ENCODE measurements at regions of chr13 and their contacts with region 1.

Region 1: DNA sequence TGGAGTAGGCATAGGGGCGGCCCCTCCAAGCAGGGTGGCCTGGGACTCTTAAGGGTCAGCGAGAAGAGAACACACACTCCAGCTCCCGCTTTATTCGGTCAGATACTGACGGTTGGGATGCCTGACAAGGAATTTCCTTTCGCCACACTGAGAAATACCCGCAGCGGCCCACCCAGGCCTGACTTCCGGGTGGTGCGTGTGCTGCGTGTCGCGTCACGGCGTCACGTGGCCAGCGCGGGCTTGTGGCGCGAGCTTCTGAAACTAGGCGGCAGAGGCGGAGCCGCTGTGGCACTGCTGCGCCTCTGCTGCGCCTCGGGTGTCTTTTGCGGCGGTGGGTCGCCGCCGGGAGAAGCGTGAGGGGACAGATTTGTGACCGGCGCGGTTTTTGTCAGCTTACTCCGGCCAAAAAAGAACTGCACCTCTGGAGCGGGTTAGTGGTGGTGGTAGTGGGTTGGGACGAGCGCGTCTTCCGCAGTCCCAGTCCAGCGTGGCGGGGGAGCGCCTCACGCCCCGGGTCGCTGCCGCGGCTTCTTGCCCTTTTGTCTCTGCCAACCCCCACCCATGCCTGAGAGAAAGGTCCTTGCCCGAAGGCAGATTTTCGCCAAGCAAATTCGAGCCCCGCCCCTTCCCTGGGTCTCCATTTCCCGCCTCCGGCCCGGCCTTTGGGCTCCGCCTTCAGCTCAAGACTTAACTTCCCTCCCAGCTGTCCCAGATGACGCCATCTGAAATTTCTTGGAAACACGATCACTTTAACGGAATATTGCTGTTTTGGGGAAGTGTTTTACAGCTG is at the starts of genes BRCA2 and ZAR1L:
- DNase-seq: peak; percentile 68
- ATAC-seq: peak; percentile 93
- H3K4me3 ChIP-seq: peak within 1 kb of the TSS; percentile 78
- H3K27ac ChIP-seq: peak within 1 kb of the TSS; percentile 97
- H3K4me1 ChIP-seq: peaks cover 20% of the 10 kb centered on the region
- H3K27me3 ChIP-seq: no peaks in the 10 kb centered on the region
- CTCF ChIP-seq: no peak
- EP300 ChIP-seq: no peak; a peak in 1 of 4 replicates
- POLR2A ChIP-seq: peak; percentile 91
- RAD21 ChIP-seq: no peak
- polyA plus RNA-seq, gene BRCA2: 7.6 to 15.8 TPM
- polyA plus RNA-seq, gene ZAR1L: not detected

Region 2: GRCh38 chr13:32427852-32428580 is 112.6 kb after region 1 on chr13 and contains the start of gene N4BP2L1:
- CTCF ChIA-PET with region 1: interaction called, 8 read pairs
- POLR2A ChIA-PET with region 1: interaction called, 16 read pairs
- RAD21 ChIA-PET with region 1: interaction called, 8 read pairs
- SMC1A ChIA-PET with region 1: interaction called, 6 read pairs
- in situ Hi-C with region 1: no loop called
- intact Hi-C with region 1: loop called (anchors 5 kb)
- DNase-seq: peak; percentile 87
- ATAC-seq: peak; percentile 85
- H3K4me3 ChIP-seq: peak within 1 kb of the TSS; percentile 94
- H3K27ac ChIP-seq: peak within 1 kb of the TSS; percentile 98
- H3K4me1 ChIP-seq: peaks cover 17% of the 10 kb centered on the region
- H3K27me3 ChIP-seq: no peaks in the 10 kb centered on the region
- CTCF ChIP-seq: no peak
- EP300 ChIP-seq: peak in 1 of 2 experiments; percentile 36; a peak in 1 of 4 replicates
- POLR2A ChIP-seq: peak; percentile 91
- RAD21 ChIP-seq: no peak
- polyA plus RNA-seq, gene N4BP2L1: 3.3 to 5.7 TPM

Region 3: GRCh38 chr13:32515246-32515645 is 199.8 kb after region 1 on chr13:
- CTCF ChIA-PET with region 1: no interaction called
- POLR2A ChIA-PET with region 1: no interaction called
- RAD21 ChIA-PET with region 1: no interaction called
- SMC1A ChIA-PET with region 1: no interaction called
- in situ Hi-C with region 1: no loop called
- intact Hi-C with region 1: no loop called
- DNase-seq: no peak
- ATAC-seq: no peak
- H3K4me3 ChIP-seq: no peak overlapping the region
- H3K27ac ChIP-seq: no peak overlapping the region
- H3K4me1 ChIP-seq: no peaks in the 10 kb centered on the region
- H3K27me3 ChIP-seq: no peaks in the 10 kb centered on the region
- CTCF ChIP-seq: no peak
- EP300 ChIP-seq: no peak
- POLR2A ChIP-seq: no peak
- RAD21 ChIP-seq: no peak

Region 4: GRCh38 chr13:32538621-32539246 is 223.3 kb after region 1 on chr13 and contains the start of gene N4BP2L2:
- CTCF ChIA-PET with region 1: interaction called, 7 read pairs
- POLR2A ChIA-PET with region 1: interaction called, 3 read pairs
- RAD21 ChIA-PET with region 1: interaction called, 3 read pairs
- SMC1A ChIA-PET with region 1: no interaction called
- in situ Hi-C with region 1: no loop called
- intact Hi-C with region 1: loop called (anchors 5 kb)
- DNase-seq: peak; percentile 94
- ATAC-seq: peak; percentile 95
- H3K4me3 ChIP-seq: peak within 1 kb of the TSS; percentile 94
- H3K27ac ChIP-seq: peak within 1 kb of the TSS; percentile 100
- H3K4me1 ChIP-seq: peaks cover 5% of the 10 kb centered on the region; the same call in 1 of the 2 replicates
- H3K27me3 ChIP-seq: no peaks in the 10 kb centered on the region
- CTCF ChIP-seq: peak; percentile 12 to 47 (median 13); a peak in 3 of 6 replicates
- EP300 ChIP-seq: 0 out of 4 replicates have a peak, but pooled peaks of 1 of the 2 experiments have one; percentile 13
- POLR2A ChIP-seq: peak; percentile 85
- RAD21 ChIP-seq: peak; percentile 39; the same call in 1 of the 2 replicates
- polyA plus RNA-seq, gene N4BP2L2: 41.7 to 59.8 TPM